ENCODE measurements at regions of chr9 and their contacts with region 1.

Region 1: GRCh38 chr9:2727966-2728613 is 10.8 kb downstream of the KCNV2 start:
- DNase-seq: no peak
- H3K4me3 ChIP-seq: no peak overlapping the region
- CTCF ChIP-seq: peak; percentile 57

Region 2: DNA sequence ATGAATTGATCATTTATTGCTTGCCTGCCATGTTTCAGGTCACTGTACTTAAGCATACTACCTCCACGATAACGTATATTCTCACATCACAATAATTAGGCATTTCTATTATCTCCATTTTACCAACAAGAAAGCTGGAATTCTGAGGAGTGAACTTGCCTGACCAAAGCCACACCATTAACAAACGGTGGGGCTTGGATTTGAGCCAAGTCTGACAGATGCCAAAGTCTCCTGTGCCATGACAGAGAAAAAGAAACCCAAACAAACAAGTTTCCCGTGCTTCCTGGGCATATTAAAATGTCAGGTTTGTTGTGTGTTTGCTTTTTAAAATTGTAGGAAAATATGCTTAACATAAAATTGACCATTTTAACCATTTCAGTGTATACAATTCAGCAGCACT is 51.6 kb before region 1 on chr9:
- CTCF ChIA-PET with region 1: no interaction called
- POLR2A ChIA-PET with region 1: no interaction called
- DNase-seq: no peak
- H3K4me3 ChIP-seq: no peak overlapping the region
- CTCF ChIP-seq: no peak

Region 3: DNA sequence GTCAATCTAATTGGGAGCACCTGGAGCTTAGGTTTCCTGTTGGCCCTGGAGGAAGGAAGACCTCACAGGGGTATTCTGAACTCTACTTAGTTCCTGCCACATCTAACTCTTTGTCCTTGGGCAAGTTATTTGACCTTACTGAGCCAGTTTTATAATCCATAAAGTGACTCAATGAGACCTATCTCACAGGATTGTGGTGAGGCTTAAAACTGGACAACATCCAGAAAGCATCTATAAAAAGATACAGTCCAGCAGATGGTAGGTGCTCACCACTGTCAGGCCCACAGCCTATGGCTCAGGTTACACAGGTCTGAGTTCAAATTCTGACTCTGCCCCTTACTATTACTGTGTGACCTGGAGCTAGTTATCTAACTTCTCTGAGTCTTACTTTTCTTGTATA is 12.5 kb after region 1 on chr9:
- CTCF ChIA-PET with region 1: interaction called, 14 read pairs
- POLR2A ChIA-PET with region 1: no interaction called
- DNase-seq: no peak
- H3K4me3 ChIP-seq: no peak overlapping the region
- CTCF ChIP-seq: no peak